ENCODE measurements at regions of chr14 and their contacts with region 1.

Region 1: DNA sequence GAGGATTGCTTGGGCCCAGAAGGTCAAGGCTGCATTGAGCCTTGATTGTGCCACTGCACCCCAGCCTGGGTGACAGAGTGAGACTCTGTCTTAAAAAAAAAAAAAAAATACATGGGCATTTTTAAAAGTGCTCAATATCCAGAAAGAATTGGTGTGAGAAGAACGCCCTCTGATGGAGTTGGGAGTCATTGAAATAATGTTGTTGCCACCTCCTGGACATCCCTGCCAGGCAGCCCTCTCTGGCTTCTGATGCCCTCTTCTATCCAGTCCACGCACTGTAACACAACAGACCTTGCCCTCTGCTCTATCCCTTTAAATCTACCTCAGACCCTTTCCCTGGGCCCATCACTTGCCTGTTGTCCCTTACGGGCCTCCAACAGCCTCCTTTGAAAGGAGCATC is 4.9 kb downstream of the PTGDR start:
- DNase-seq: peak; percentile 73
- H3K4me3 ChIP-seq: no peak overlapping the region
- H3K27ac ChIP-seq: no peak overlapping the region
- H3K4me1 ChIP-seq: peaks cover 6% of the 10 kb centered on the region; the same call in 1 of the 2 replicates
- H3K27me3 ChIP-seq: peaks cover 18% of the 10 kb centered on the region

Region 2: GRCh38 chr14:52003324-52003723 is 269.1 kb before region 1 on chr14:
- in situ Hi-C with region 1: loop called (anchors 10 kb)
- DNase-seq: no peak
- H3K4me3 ChIP-seq: no peak overlapping the region
- H3K27ac ChIP-seq: no peak overlapping the region
- H3K4me1 ChIP-seq: peaks cover 24% of the 10 kb centered on the region
- H3K27me3 ChIP-seq: no peaks in the 10 kb centered on the region